ENCODE measurements at regions of chr14 and their contacts with region 1.

Region 1: DNA sequence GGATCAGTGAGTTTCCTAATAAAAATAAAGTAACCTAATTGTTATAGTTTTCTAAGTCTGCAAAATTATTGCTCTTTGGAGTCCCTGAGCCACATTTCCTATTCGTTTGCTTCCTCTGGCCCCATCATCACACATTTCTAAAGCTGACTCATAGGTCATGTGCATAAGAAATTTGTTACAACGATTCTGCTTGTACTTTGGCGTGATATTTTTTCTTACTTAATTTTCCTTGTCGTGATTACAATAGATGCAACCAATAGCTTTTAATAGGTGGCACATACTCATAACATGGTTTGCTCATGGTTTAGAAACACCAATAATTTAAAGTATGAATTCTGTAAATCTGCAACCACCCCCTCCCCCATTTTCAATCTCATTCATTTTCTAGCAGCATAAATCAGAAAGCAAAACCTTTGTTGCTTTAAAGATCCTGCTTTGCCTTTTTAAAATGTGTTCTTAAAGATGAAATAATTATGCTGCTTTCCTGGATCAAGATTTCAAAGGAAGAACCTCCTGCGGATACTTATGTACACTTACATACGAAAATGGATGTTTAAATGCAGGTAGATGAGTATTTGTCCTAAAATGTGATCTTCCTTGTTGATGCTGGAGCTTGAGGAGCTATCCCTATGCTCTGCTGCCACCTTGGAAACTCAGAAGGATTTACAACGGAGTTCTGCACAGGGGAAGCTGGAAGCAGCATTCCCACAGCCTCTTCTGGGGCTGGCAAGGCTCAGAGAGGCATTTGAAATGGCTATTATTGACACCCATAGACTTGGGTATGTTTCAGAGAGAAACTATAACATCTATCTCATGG is 1.7 kb upstream of the FLRT2 start:
- DNase-seq: peak; percentile 77
- H3K4me3 ChIP-seq: peak overlapping the region; percentile 89 to 90 (median 89)
- H3K27ac ChIP-seq: peak overlapping the region; percentile 67
- H3K4me1 ChIP-seq: peaks cover 35% of the 10 kb centered on the region
- H3K27me3 ChIP-seq: no peaks in the 10 kb centered on the region
- CTCF ChIP-seq: peak; percentile 62 to 79

Region 2: DNA sequence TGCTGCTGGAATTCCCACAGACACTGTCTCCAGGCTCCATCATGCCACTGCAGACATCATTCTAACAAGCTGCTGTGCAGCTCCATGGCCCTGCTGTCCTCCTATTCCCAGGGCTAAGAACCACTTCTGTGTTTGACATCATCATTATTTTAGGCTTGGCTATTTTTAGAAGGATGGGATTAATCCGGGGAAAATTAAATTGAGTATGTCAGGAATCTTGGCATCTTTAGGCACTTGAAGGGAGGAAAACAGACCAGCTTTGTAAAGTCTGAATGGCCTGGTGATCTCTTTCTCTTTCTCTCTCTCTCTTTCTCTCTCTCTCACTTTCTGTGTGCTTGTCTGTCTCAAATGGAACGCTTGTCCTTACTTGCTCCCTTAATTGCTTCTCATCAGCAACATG is 566.7 kb before region 1 on chr14:
- CTCF ChIA-PET with region 1: no interaction called
- dilution Hi-C with region 1: no loop called
- in situ Hi-C with region 1: loop called in 1 of 2 experiments (anchors 25 kb)
- intact Hi-C with region 1: no loop called
- DNase-seq: no peak
- H3K4me3 ChIP-seq: no peak overlapping the region
- H3K27ac ChIP-seq: no peak overlapping the region
- H3K4me1 ChIP-seq: no peaks in the 10 kb centered on the region
- H3K27me3 ChIP-seq: no peaks in the 10 kb centered on the region
- CTCF ChIP-seq: no peak

Region 3: DNA sequence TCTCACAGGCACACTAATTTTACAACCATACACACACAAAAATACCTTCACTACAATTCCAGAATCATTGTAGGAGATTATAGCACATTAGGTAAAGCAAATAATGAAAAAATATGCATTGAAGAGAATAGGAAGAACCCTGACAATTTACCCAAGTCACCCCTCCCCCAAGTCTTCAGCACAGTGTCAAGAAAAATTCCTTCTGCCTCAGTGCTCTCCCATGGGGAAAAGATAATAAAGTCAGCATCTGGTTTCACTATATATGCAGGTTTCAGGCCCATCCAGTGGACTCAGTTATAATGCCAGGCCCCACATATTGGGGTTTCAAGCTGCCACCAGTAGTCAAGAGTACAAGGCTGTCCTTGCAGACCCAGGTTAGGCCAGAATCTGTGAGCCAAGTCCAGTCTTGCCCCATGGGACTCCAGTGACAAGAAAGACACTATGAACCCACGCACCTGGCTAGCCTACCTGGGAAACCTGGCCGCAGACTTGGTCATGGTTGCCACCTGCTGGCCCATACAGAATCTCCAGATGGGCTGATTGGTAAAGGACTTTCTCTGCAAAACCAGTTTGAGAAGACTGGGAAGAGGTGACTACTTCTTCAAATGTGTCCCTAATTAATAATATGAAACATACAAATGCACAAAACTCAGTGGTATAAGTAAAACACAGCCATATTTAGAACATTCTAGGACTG is 396.9 kb before region 1 on chr14:
- CTCF ChIA-PET with region 1: interaction called, 3 read pairs
- dilution Hi-C with region 1: no loop called
- in situ Hi-C with region 1: no loop called
- intact Hi-C with region 1: loop called (anchors 2 kb)
- DNase-seq: peak; percentile 54
- H3K4me3 ChIP-seq: no peak overlapping the region
- H3K27ac ChIP-seq: no peak overlapping the region
- H3K4me1 ChIP-seq: peaks cover 12% of the 10 kb centered on the region
- H3K27me3 ChIP-seq: no peaks in the 10 kb centered on the region
- CTCF ChIP-seq: peak; percentile 61 to 88

Region 4: GRCh38 chr14:85276979-85277228 is 251.4 kb before region 1 on chr14:
- CTCF ChIA-PET with region 1: no interaction called
- dilution Hi-C with region 1: no loop called
- in situ Hi-C with region 1: no loop called
- intact Hi-C with region 1: loop called (anchors 2 kb)
- DNase-seq: no peak
- H3K4me3 ChIP-seq: no peak overlapping the region
- H3K27ac ChIP-seq: no peak overlapping the region
- H3K4me1 ChIP-seq: peaks cover 6% of the 10 kb centered on the region
- H3K27me3 ChIP-seq: no peaks in the 10 kb centered on the region
- CTCF ChIP-seq: no peak

Region 5: GRCh38 chr14:85466678-85467077 is 61.6 kb before region 1 on chr14:
- CTCF ChIA-PET with region 1: no interaction called
- dilution Hi-C with region 1: no loop called
- in situ Hi-C with region 1: no loop called
- intact Hi-C with region 1: loop called (anchors 5 kb)
- DNase-seq: peak; percentile 65
- H3K4me3 ChIP-seq: no peak overlapping the region
- H3K27ac ChIP-seq: no peak overlapping the region
- H3K4me1 ChIP-seq: peaks cover 14% of the 10 kb centered on the region
- H3K27me3 ChIP-seq: no peaks in the 10 kb centered on the region
- CTCF ChIP-seq: no peak

Region 6: GRCh38 chr14:85917716-85918115 is 389.4 kb after region 1 on chr14:
- CTCF ChIA-PET with region 1: no interaction called
- dilution Hi-C with region 1: no loop called
- in situ Hi-C with region 1: no loop called
- intact Hi-C with region 1: no loop called
- DNase-seq: no peak
- H3K4me3 ChIP-seq: no peak overlapping the region
- H3K27ac ChIP-seq: no peak overlapping the region
- H3K4me1 ChIP-seq: no peaks in the 10 kb centered on the region
- H3K27me3 ChIP-seq: no peaks in the 10 kb centered on the region
- CTCF ChIP-seq: no peak

Region 7: GRCh38 chr14:86038387-86039042 is 510.2 kb after region 1 on chr14:
- CTCF ChIA-PET with region 1: no interaction called
- dilution Hi-C with region 1: no loop called
- in situ Hi-C with region 1: no loop called
- intact Hi-C with region 1: loop called (anchors 2 kb)
- DNase-seq: peak; percentile 20
- H3K4me3 ChIP-seq: no peak overlapping the region
- H3K27ac ChIP-seq: no peak overlapping the region
- H3K4me1 ChIP-seq: no peaks in the 10 kb centered on the region
- H3K27me3 ChIP-seq: no peaks in the 10 kb centered on the region
- CTCF ChIP-seq: peak; percentile 72 to 81